Activated naive CD4-positive, alpha-beta T cell treated with anti-CD3 and anti-CD28 coated beads for 36 hours (primary cell): ENCODE measurements at regions of chr14 and their contacts with region 1.

Region 1: GRCh38 chr14:91021991-91022621 is 38.3 kb downstream of the RPS6KA5 start:
- DNase-seq: no peak
- H3K4me3 Mint-ChIP-seq: peak overlapping the region; percentile 48
- H3K27ac Mint-ChIP-seq: peak overlapping the region; percentile 80
- H3K4me1 Mint-ChIP-seq: peaks cover 43% of the 10 kb centered on the region
- H3K27me3 Mint-ChIP-seq: no peaks in the 10 kb centered on the region

Region 2: GRCh38 chr14:90874599-90874998 is 147.5 kb before region 1 on chr14:
- CTCF ChIA-PET with region 1: no interaction called
- intact Hi-C with region 1: no loop called
- DNase-seq: no peak
- H3K4me3 Mint-ChIP-seq: no peak overlapping the region
- H3K27ac Mint-ChIP-seq: no peak overlapping the region
- H3K4me1 Mint-ChIP-seq: peaks cover 5% of the 10 kb centered on the region
- H3K27me3 Mint-ChIP-seq: no peaks in the 10 kb centered on the region

Region 3: GRCh38 chr14:90987140-90987539 is 35.0 kb before region 1 on chr14:
- CTCF ChIA-PET with region 1: interaction called, 5 read pairs
- intact Hi-C with region 1: loop called (anchors 1 kb)
- DNase-seq: no peak
- H3K4me3 Mint-ChIP-seq: no peak overlapping the region
- H3K27ac Mint-ChIP-seq: no peak overlapping the region
- H3K4me1 Mint-ChIP-seq: peaks cover 32% of the 10 kb centered on the region
- H3K27me3 Mint-ChIP-seq: no peaks in the 10 kb centered on the region

Region 4: DNA sequence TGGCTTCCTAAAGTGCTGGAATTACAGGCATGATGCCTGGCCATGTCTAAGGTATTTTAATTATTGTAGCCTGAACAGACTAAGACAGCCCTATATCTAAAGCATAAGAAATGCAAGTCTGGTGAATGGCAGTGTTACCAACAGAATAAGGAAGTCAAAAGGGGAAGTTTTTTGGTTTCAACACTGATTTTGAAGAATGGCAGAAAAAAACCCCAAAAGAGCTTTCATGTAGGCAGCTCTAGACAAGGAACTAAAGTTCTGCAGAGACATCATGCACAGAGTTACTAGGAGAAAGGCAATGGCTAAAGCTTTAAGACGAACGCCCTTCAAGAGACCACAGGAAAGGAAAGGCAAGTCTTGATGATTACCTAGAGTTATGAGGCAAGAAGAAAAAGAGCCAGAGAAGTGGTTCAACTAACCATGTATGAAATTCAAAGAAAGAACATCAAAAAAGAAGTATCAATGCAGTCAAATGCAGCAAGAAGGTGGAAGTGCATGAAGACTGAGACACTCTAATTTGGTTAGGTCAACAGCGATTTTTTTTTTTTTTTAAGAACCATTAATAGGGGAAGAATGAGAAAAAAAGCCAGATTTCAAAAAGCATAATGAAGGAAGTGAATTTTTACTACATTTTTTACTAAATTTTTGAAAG is 12.5 kb before region 1 on chr14:
- CTCF ChIA-PET with region 1: interaction called, 3 read pairs
- intact Hi-C with region 1: loop called (anchors 1 kb)
- DNase-seq: no peak
- H3K4me3 Mint-ChIP-seq: no peak overlapping the region
- H3K27ac Mint-ChIP-seq: peak overlapping the region; percentile 3
- H3K4me1 Mint-ChIP-seq: peaks cover 40% of the 10 kb centered on the region
- H3K27me3 Mint-ChIP-seq: no peaks in the 10 kb centered on the region

Region 5: DNA sequence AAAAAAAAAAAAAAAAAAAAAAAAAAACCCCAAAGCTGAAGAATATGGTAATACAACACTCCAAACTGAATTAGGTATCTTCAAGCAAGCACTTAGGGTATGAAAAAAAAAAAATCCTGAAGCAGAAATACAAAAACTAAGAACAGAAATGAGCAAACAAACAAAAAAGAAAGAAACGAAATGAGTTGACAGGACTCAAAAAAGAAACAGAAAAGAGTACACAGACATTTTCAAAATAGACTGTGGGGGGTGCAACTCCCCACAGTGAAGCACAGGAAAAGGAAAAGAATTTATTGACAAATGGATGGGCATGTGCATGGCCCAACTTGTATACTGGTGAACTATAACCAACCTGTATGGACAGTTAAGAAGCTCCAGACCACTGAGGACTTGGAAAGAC is 13.7 kb after region 1 on chr14:
- CTCF ChIA-PET with region 1: interaction called, 5 read pairs
- intact Hi-C with region 1: loop called (anchors 1 kb)
- DNase-seq: peak; percentile 34
- H3K4me3 Mint-ChIP-seq: no peak overlapping the region
- H3K27ac Mint-ChIP-seq: peak overlapping the region; percentile 68
- H3K4me1 Mint-ChIP-seq: peaks cover 66% of the 10 kb centered on the region
- H3K27me3 Mint-ChIP-seq: no peaks in the 10 kb centered on the region